HepG2 (cell line): ENCODE measurements at regions of chr16 and their contacts with region 1.

Region 1: GRCh38 chr16:51151961-51152663 is 1.0 kb upstream of the SALL1 start:
- DNase-seq: peak; percentile 79
- ATAC-seq: peak; percentile 84
- H3K4me3 ChIP-seq: peak overlapping the region; percentile 90 to 97 (median 94)
- H3K27ac ChIP-seq: peak overlapping the region; percentile 86
- H3K4me1 ChIP-seq: peaks cover 53% of the 10 kb centered on the region
- H3K27me3 ChIP-seq: peaks cover 6 to 32% of the 10 kb centered on the region in 2 experiments
- CTCF ChIP-seq: 0 out of 2 replicates have a peak, but pooled peaks have one; percentile 9
- EP300 ChIP-seq: no peak
- POLR2A ChIP-seq: peak; percentile 36 to 59; a peak in 2 of 4 replicates
- RAD21 ChIP-seq: no peak

Region 2: GRCh38 chr16:50861970-50862411 is 290.1 kb before region 1 on chr16:
- CTCF ChIA-PET with region 1: no interaction called
- POLR2A ChIA-PET with region 1: no interaction called
- in situ Hi-C with region 1: no loop called
- intact Hi-C with region 1: loop called (anchors 5 kb)
- DNase-seq: peak; percentile 86
- ATAC-seq: peak; percentile 58
- H3K4me3 ChIP-seq: no peak overlapping the region
- H3K27ac ChIP-seq: no peak overlapping the region
- H3K4me1 ChIP-seq: peaks cover 37% of the 10 kb centered on the region
- H3K27me3 ChIP-seq: no peaks in the 10 kb centered on the region
- CTCF ChIP-seq: no peak
- EP300 ChIP-seq: 0 out of 4 replicates have a peak, but pooled peaks of 1 of the 2 experiments have one; percentile 14
- POLR2A ChIP-seq: no peak
- RAD21 ChIP-seq: no peak

Region 3: GRCh38 chr16:51055434-51055833 is 96.7 kb before region 1 on chr16:
- CTCF ChIA-PET with region 1: no interaction called
- POLR2A ChIA-PET with region 1: interaction called, 9 read pairs
- in situ Hi-C with region 1: no loop called
- intact Hi-C with region 1: loop called (anchors 1 kb)
- DNase-seq: no peak
- ATAC-seq: no peak
- H3K4me3 ChIP-seq: no peak overlapping the region
- H3K27ac ChIP-seq: no peak overlapping the region
- H3K4me1 ChIP-seq: peaks cover 86% of the 10 kb centered on the region
- H3K27me3 ChIP-seq: no peaks in the 10 kb centered on the region
- CTCF ChIP-seq: no peak
- EP300 ChIP-seq: no peak
- POLR2A ChIP-seq: no peak
- RAD21 ChIP-seq: no peak

Region 4: GRCh38 chr16:51119556-51119955 is 32.6 kb before region 1 on chr16:
- CTCF ChIA-PET with region 1: no interaction called
- POLR2A ChIA-PET with region 1: interaction called, 12 read pairs
- in situ Hi-C with region 1: no loop called
- intact Hi-C with region 1: loop called (anchors 2 kb)
- DNase-seq: no peak
- ATAC-seq: peak; percentile 21
- H3K4me3 ChIP-seq: peak overlapping the region; percentile 49 to 57 (median 52)
- H3K27ac ChIP-seq: peak overlapping the region; percentile 94
- H3K4me1 ChIP-seq: peaks cover 87% of the 10 kb centered on the region
- H3K27me3 ChIP-seq: no peaks in the 10 kb centered on the region
- CTCF ChIP-seq: peak; percentile 44
- EP300 ChIP-seq: no peak
- POLR2A ChIP-seq: no peak
- RAD21 ChIP-seq: no peak

Region 5: DNA sequence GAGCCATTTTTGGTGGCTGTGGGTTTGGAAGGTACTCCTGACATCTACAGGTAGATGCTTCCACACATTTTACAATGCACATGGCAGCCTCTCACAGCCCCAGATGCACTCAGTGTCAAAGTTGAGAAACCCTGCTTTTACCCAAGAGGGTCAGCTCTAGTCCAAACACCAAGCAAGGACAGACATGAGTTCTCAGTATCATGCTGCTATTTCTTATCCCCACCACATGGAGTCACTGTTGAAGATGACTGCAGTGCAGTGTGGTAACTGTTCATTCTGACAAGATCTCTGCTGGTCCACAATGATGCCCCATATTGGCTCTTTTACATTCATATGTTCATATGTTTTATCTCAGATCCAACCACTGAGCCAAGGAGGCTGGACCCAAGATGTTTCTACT is 49.5 kb after region 1 on chr16:
- CTCF ChIA-PET with region 1: no interaction called
- POLR2A ChIA-PET with region 1: no interaction called
- in situ Hi-C with region 1: no loop called
- intact Hi-C with region 1: no loop called
- DNase-seq: no peak
- ATAC-seq: no peak
- H3K4me3 ChIP-seq: no peak overlapping the region
- H3K27ac ChIP-seq: no peak overlapping the region
- H3K4me1 ChIP-seq: no peaks in the 10 kb centered on the region
- H3K27me3 ChIP-seq: no peaks in the 10 kb centered on the region
- CTCF ChIP-seq: peak; percentile 39; the same call in 1 of the 2 replicates
- EP300 ChIP-seq: no peak
- POLR2A ChIP-seq: no peak
- RAD21 ChIP-seq: no peak

Region 6: GRCh38 chr16:51225878-51226277 is 73.8 kb after region 1 on chr16:
- CTCF ChIA-PET with region 1: no interaction called
- POLR2A ChIA-PET with region 1: no interaction called
- in situ Hi-C with region 1: no loop called
- intact Hi-C with region 1: no loop called
- DNase-seq: no peak
- ATAC-seq: no peak
- H3K4me3 ChIP-seq: no peak overlapping the region
- H3K27ac ChIP-seq: no peak overlapping the region
- H3K4me1 ChIP-seq: peaks cover 9% of the 10 kb centered on the region
- H3K27me3 ChIP-seq: no peaks in the 10 kb centered on the region
- CTCF ChIP-seq: no peak
- EP300 ChIP-seq: no peak
- POLR2A ChIP-seq: no peak
- RAD21 ChIP-seq: no peak

Region 7: DNA sequence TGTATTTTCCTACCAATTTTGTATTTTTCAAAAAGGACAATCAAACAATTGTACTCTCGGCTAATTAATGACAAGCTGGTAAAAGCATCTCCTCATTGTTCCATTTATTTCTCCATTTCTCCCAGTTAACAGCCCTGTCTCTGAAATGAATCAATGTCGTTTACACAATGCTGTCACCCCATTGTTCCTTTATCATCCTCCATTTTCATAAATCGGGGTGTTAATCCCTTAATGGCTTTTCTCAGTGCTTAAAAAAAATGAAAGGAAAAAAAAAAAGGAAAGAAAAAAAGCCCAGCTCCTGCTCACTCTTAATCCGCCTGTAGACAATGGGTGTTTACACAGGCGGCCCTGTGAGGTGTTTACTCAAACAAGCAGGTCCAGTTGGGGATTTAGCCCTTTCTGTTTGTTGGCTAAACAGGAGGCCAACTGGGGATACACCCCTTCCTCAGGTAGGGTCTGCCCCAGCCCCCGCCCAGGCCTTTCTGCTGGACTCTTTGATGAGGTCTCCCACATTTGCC is 85.8 kb after region 1 on chr16:
- CTCF ChIA-PET with region 1: no interaction called
- POLR2A ChIA-PET with region 1: interaction called, 14 read pairs
- in situ Hi-C with region 1: no loop called
- intact Hi-C with region 1: loop called (anchors 5 kb)
- DNase-seq: peak; percentile 43
- ATAC-seq: peak; percentile 20; the same call in 1 of the 3 replicates
- H3K4me3 ChIP-seq: no peak overlapping the region
- H3K27ac ChIP-seq: no peak overlapping the region
- H3K4me1 ChIP-seq: peaks cover 42% of the 10 kb centered on the region
- H3K27me3 ChIP-seq: peaks cover 0 to 13% of the 10 kb centered on the region in 2 experiments; a peak in 2 of 5 replicates
- CTCF ChIP-seq: no peak
- EP300 ChIP-seq: peak in 1 of 2 experiments; percentile 70; a peak in 2 of 4 replicates
- POLR2A ChIP-seq: no peak
- RAD21 ChIP-seq: no peak

Region 8: DNA sequence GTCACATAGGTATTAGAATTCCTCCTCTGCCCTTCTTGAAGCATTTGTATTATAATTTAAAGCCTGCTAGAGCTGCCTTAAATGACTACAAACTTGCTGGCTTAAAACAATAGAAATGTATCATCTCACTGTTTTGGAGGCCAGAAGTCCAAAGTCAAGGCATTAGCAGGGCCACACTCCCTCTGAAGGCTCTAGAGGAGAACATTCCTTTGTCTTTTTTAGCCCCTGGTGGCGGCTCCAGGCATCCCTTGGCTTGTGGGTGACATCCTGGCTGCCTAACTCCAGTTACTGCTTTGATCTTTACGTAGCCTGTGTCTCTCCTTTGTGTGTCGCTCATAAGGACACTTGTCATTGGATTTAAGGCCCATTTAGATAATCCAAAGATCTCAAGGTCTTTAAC is 185.6 kb after region 1 on chr16:
- CTCF ChIA-PET with region 1: no interaction called
- POLR2A ChIA-PET with region 1: no interaction called
- in situ Hi-C with region 1: no loop called
- intact Hi-C with region 1: loop called (anchors 1 kb)
- DNase-seq: peak; percentile 57
- ATAC-seq: peak; percentile 99
- H3K4me3 ChIP-seq: no peak overlapping the region
- H3K27ac ChIP-seq: no peak overlapping the region
- H3K4me1 ChIP-seq: peaks cover 7% of the 10 kb centered on the region; the same call in 1 of the 2 replicates
- H3K27me3 ChIP-seq: no peaks in the 10 kb centered on the region
- CTCF ChIP-seq: peak; percentile 32; the same call in 1 of the 2 replicates
- EP300 ChIP-seq: no peak
- POLR2A ChIP-seq: no peak
- RAD21 ChIP-seq: peak; percentile 49; the same call in 1 of the 2 replicates

Region 9: GRCh38 chr16:51762081-51762996 is 610.2 kb after region 1 on chr16:
- CTCF ChIA-PET with region 1: no interaction called
- POLR2A ChIA-PET with region 1: no interaction called
- in situ Hi-C with region 1: loop called (anchors 5 kb)
- intact Hi-C with region 1: loop called (anchors 2 kb)
- DNase-seq: peak; percentile 52
- ATAC-seq: peak; percentile 100
- H3K4me3 ChIP-seq: no peak overlapping the region
- H3K27ac ChIP-seq: no peak overlapping the region
- H3K4me1 ChIP-seq: no peaks in the 10 kb centered on the region
- H3K27me3 ChIP-seq: no peaks in the 10 kb centered on the region; a peak in 2 of 5 replicates
- CTCF ChIP-seq: peak; percentile 96
- EP300 ChIP-seq: no peak
- POLR2A ChIP-seq: no peak
- RAD21 ChIP-seq: peak; percentile 91